ENCODE measurements at regions of chr10 and their contacts with region 1.

Region 1: DNA sequence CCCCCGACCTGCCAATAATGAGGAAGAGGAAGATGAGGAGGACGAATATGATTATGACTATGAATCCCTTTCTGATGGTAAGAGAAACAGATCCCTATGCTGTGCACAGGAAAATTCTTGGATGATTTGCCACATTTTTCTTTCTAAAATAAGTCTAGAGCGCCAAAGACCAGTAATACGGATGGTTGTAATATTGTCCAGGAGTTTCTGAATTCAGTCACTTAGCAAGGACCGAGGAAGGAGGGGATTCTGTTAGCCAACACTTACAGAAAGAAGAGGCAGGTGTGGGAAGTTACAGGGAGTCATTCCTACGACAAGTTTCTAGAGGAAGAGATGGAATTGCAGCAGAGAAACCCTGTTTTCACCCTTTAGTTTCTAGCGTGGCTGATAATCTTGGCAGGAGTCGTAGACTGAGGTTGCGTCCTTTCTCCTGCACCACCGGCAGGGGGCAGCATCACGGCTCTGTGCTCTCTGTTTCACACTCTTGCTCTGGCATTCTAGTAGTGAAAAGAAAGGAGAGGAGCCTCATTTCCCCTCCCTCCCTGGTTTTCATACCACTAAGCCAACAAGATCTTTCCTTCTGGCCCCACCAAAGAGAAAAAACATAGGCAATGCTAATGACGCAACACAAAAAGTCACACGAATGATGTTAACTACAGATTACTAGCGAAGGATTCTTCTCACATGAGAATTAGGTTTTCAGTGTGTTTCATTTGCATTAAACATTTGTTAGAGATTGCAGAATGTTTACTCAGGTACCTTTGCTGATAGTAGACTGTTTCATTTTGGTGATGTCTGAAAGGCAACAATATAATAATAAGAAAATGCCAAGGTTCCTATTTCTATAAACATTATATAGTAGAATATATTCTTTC is 82.7 kb downstream of the NOC3L start:
- DNase-seq: peak; percentile 86
- H3K4me3 ChIP-seq: no peak overlapping the region
- H3K27ac ChIP-seq: peak overlapping the region in 3 of 8 donors; percentile 2 to 85 (median 39)
- H3K4me1 ChIP-seq: peaks cover 0 to 19% (median 8%) of the 10 kb centered on the region in 6 donors
- H3K27me3 ChIP-seq: peaks cover 0 to 18% (median 0%) of the 10 kb centered on the region in 7 donors
- CTCF ChIP-seq: peak; percentile 31 to 85 (median 68)
- POLR2A ChIP-seq: no peak

Region 2: GRCh38 chr10:94115725-94116124 is 164.3 kb before region 1 on chr10:
- intact Hi-C with region 1: no loop called
- DNase-seq: no peak
- H3K4me3 ChIP-seq: no peak overlapping the region
- H3K27ac ChIP-seq: no peak overlapping the region
- H3K4me1 ChIP-seq: no peaks in the 10 kb centered on the region
- H3K27me3 ChIP-seq: peaks cover 0 to 4% (median 0%) of the 10 kb centered on the region in 7 donors
- CTCF ChIP-seq: no peak
- POLR2A ChIP-seq: no peak

Region 3: GRCh38 chr10:94194256-94194655 is 85.8 kb before region 1 on chr10:
- intact Hi-C with region 1: no loop called
- DNase-seq: no peak
- H3K4me3 ChIP-seq: no peak overlapping the region
- H3K27ac ChIP-seq: no peak overlapping the region
- H3K4me1 ChIP-seq: no peaks in the 10 kb centered on the region
- H3K27me3 ChIP-seq: no peaks in the 10 kb centered on the region
- CTCF ChIP-seq: no peak
- POLR2A ChIP-seq: no peak

Region 4: DNA sequence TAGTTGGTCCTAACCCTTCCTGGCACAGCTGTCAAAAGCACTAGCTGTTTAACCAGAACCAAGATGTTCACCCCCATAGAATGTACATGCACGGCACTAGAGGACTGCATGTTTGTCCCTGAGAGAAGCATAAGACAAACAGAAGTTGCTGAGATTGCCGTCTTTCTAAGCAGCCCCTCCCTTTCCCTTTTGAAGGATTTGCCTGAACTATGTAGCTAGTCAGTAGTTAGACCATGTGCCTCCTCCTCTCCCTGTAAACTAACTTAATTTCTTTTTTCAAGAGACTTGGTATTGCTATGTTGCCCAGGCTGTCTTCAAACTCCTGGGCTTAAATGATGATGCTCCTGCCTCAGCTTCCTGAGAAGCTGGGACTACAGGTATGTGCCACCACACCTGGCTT is 163.0 kb after region 1 on chr10:
- intact Hi-C with region 1: loop called (anchors 5 kb)
- DNase-seq: no peak
- H3K4me3 ChIP-seq: no peak overlapping the region
- H3K27ac ChIP-seq: no peak overlapping the region
- H3K4me1 ChIP-seq: peaks cover 0 to 27% (median 1%) of the 10 kb centered on the region in 6 donors
- H3K27me3 ChIP-seq: no peaks in the 10 kb centered on the region
- CTCF ChIP-seq: no peak
- POLR2A ChIP-seq: no peak

Measured in spleen (tissue), 13 donors.